ENCODE measurements at regions of chr4 and their contacts with region 1.

Region 1: GRCh38 chr4:77044461-77045150 is 31.2 kb downstream of the CCNI start:
- H3K4me3 Mint-ChIP-seq: no peak overlapping the region
- H3K27ac Mint-ChIP-seq: no peak overlapping the region
- H3K4me1 Mint-ChIP-seq: peaks cover 17% of the 10 kb centered on the region
- H3K27me3 Mint-ChIP-seq: no peaks in the 10 kb centered on the region

Region 2: GRCh38 chr4:76949276-76950051 is 95.1 kb before region 1 on chr4 and contains the start of gene SEPTIN11:
- intact Hi-C with region 1: loop called (anchors 5 kb)
- H3K4me3 Mint-ChIP-seq: peak within 1 kb of the TSS; percentile 92
- H3K27ac Mint-ChIP-seq: peak within 1 kb of the TSS; percentile 85
- H3K4me1 Mint-ChIP-seq: peaks cover 41% of the 10 kb centered on the region
- H3K27me3 Mint-ChIP-seq: peaks cover 16% of the 10 kb centered on the region